ENCODE measurements at regions of chr3 and their contacts with region 1.

Region 1: GRCh38 chr3:129824926-129825541 is 68.5 kb downstream of the TMCC1 start:
- DNase-seq: peak; percentile 75
- H3K4me3 Mint-ChIP-seq: no peak overlapping the region
- H3K27ac Mint-ChIP-seq: peak overlapping the region; percentile 2
- H3K4me1 Mint-ChIP-seq: peaks cover 11% of the 10 kb centered on the region
- H3K27me3 Mint-ChIP-seq: no peaks in the 10 kb centered on the region
- CTCF ChIP-seq: peak; percentile 64

Region 2: DNA sequence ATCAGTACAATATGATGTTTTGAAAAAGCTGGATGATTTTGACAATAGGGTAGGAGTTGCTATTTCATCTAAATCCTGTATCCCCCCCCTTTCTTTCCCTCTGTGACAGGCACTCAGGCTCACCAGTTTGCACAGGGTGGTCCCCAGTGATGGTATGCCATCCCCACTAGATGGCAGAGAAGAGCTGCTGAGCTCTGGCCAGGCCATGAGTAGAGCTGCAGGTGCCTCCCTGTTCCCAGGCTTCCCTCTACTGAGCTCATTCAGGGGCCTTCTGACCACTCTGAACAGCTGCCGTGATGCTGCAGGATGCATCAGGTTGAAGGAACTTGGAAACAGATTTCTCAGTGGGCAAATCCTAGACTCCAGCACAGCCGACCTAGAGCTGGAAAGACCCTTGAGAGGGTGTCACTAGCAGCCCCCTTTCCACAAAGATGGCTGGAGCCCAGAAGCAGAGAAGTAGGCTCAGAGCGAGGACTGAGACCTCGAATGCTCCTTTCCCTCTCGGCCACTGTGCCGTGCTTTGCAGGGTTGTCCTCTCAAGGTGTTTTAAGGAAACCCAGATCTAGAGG is 441.7 kb before region 1 on chr3:
- CTCF ChIA-PET with region 1: interaction called, 4 read pairs
- POLR2A ChIA-PET with region 1: no interaction called
- intact Hi-C with region 1: loop called (anchors 1 kb)
- DNase-seq: peak; percentile 77
- H3K4me3 Mint-ChIP-seq: no peak overlapping the region
- H3K27ac Mint-ChIP-seq: no peak overlapping the region
- H3K4me1 Mint-ChIP-seq: no peaks in the 10 kb centered on the region
- H3K27me3 Mint-ChIP-seq: no peaks in the 10 kb centered on the region
- CTCF ChIP-seq: peak; percentile 61

Region 3: DNA sequence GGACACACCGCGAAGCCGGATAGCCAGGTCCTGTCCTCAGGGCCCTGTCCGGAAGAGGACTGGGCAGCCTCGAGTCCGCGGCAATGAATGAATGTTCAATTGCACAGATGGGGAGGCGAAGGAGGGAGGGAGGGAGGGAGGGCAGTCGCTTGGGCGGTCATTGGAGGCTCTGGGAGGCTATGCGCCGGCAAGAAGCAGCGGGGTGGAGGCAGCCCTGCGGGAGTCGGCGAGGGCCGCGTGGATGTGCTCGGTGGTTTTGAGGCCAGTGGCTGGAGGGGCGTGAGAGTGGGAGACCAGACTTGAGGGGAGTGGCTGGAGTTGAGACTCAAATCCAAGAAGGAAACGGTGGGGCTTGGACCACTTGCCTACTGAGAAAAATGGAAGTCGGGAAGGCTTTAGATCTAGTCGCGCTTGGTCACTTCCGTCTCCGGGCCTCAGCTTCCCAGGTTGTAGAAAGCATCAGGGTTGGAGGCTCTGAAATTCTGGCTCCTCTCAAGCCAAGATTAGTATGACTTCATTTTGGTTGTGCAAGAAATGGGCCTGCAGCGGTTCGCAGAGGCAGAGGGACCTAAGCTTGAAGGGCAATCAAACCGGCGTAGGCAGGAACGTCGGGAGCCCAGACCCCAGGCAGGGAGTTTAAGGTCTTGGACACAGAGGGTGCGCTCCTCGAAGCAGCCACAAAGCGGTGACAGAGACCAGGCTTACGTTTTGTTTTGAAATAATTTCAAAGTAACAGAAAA is 197.4 kb before region 1 on chr3:
- CTCF ChIA-PET with region 1: interaction called, 36 read pairs
- POLR2A ChIA-PET with region 1: interaction called, 3 read pairs
- intact Hi-C with region 1: loop called (anchors 1 kb)
- DNase-seq: peak; percentile 92
- H3K4me3 Mint-ChIP-seq: peak overlapping the region; percentile 71
- H3K27ac Mint-ChIP-seq: peak overlapping the region; percentile 74
- H3K4me1 Mint-ChIP-seq: peaks cover 20% of the 10 kb centered on the region
- H3K27me3 Mint-ChIP-seq: no peaks in the 10 kb centered on the region
- CTCF ChIP-seq: peak; percentile 63

Region 4: DNA sequence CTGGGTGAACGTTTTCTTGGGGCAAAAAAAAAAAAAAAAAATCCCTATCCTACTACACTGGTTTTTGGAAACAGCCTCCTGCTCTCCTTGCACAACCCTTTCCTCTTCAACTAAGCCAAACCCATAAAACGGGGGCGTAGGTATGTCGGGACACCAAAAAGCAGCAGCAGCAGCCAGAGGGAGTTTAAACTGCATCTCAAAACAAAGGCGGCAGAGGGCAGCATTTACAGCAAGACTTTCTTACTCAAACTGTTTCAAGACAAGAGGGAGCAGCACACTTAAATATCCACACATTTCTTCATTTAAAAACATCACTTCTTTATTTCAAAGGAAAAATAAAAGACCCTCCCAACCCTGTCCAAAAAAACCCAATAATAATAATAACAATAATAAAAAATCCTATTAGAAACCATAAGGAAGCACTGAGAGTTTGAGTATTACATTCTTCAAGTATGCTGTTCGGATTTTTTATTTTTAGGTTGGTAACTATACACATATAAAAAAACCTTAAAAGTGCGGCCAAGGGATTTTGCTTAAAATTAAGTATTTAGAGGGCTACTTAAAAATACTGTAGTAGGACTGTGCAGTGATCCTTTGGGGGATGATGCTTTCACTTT is 174.7 kb before region 1 on chr3:
- CTCF ChIA-PET with region 1: interaction called, 170 read pairs
- POLR2A ChIA-PET with region 1: interaction called, 3 read pairs
- intact Hi-C with region 1: loop called (anchors 1 kb)
- DNase-seq: peak; percentile 88
- H3K4me3 Mint-ChIP-seq: no peak overlapping the region
- H3K27ac Mint-ChIP-seq: no peak overlapping the region
- H3K4me1 Mint-ChIP-seq: peaks cover 21% of the 10 kb centered on the region
- H3K27me3 Mint-ChIP-seq: no peaks in the 10 kb centered on the region
- CTCF ChIP-seq: peak; percentile 75

Region 5: DNA sequence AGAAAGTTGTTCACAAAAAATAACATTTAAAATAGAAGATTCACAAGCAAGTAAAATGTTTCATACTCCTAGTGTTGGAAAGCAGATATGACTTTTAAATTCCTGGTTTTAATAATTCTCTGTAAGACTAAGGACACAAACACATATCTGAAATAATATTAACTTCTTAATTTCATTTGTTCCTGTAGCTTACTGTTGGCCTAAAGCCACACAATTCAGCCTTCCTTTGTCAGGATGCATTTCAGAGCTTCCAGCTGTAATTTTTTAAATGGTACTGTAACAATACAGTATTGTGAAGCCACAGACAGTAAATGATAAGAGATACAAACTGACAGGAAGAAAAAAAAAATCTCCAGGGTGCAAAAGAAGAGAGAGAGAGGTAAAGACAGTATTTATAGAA is 15.7 kb before region 1 on chr3:
- CTCF ChIA-PET with region 1: interaction called, 33 read pairs
- POLR2A ChIA-PET with region 1: interaction called, 3 read pairs
- intact Hi-C with region 1: no loop called
- DNase-seq: no peak
- H3K4me3 Mint-ChIP-seq: no peak overlapping the region
- H3K27ac Mint-ChIP-seq: no peak overlapping the region
- H3K4me1 Mint-ChIP-seq: peaks cover 5% of the 10 kb centered on the region
- H3K27me3 Mint-ChIP-seq: no peaks in the 10 kb centered on the region
- CTCF ChIP-seq: no peak

Region 6: DNA sequence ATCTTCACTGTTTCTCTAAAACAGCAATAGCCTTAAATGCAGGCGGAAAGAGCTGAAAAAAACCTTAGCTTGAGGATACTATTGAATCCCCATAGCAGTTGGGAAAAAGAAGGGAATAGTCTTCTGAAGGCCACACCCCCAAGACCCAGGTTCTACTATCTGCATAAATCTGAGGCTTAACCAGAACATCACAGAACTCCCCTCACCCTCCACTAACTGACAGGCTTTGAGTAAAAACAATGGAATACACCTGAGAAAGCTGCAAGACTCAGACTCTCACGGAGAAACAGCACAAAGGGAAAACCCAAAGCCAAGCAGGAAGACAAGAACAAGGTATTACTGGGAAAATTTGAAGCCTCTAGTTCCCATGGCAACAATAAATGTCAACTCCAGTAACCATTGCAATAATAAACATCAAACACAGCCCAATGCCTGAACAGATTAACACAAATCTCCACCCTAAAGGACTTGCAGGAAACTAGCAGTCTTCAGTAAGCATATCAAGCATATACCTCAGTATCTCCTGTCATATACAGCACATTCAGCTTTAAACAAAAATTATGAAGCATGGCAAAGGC is 12.1 kb after region 1 on chr3:
- CTCF ChIA-PET with region 1: interaction called, 16 read pairs
- POLR2A ChIA-PET with region 1: no interaction called
- intact Hi-C with region 1: no loop called
- DNase-seq: peak; percentile 8
- H3K4me3 Mint-ChIP-seq: no peak overlapping the region
- H3K27ac Mint-ChIP-seq: peak overlapping the region; percentile 55
- H3K4me1 Mint-ChIP-seq: peaks cover 17% of the 10 kb centered on the region
- H3K27me3 Mint-ChIP-seq: no peaks in the 10 kb centered on the region
- CTCF ChIP-seq: no peak

Region 7: DNA sequence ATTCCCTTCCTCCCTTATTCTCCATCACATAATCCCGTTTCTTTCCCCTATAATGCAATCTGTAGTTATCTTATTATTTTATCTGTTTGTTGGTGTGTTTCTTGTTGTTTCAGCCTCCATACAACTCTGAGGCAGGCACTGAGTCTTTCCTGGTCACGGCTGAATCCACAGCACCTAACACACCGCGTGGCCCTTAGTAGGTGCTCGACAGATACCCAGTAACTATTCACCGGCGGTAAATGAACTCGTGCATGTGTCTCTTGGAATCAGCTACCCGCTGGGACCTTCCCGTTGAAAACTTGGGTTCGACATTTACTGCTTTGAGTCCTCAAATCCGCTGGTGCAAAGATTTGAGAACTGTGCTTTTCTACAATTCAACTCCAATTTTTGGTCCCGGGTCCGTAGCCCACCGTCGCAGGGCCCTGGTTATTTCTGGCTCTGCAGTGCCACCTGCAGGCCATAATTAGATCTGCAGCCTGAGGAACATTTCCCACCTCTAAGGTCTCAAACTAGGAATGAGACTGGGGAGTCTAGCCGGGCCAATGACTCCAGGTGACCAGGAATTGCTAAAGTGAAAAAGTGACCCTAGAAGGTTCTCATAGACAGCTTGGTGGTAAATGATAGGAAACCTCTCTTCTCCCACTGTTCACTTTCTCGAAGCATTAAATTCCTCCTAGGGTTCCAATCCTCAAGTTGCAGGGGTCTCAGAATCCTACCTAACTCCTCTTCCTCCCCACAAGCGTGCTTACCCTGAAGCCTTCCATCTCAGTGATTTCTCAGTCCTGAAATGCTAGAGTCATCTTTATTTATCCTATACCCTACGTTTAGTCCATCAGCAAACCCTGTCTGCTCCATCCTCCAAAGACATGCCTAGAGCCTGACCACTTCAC is 109.4 kb after region 1 on chr3:
- CTCF ChIA-PET with region 1: interaction called, 11 read pairs
- POLR2A ChIA-PET with region 1: interaction called, 3 read pairs
- intact Hi-C with region 1: loop called (anchors 1 kb)
- DNase-seq: peak; percentile 51
- H3K4me3 Mint-ChIP-seq: peak overlapping the region; percentile 42
- H3K27ac Mint-ChIP-seq: no peak overlapping the region
- H3K4me1 Mint-ChIP-seq: peaks cover 17% of the 10 kb centered on the region
- H3K27me3 Mint-ChIP-seq: no peaks in the 10 kb centered on the region
- CTCF ChIP-seq: peak; percentile 81